AG04450 (cell line): ENCODE measurements at regions of chr4 and their contacts with region 1.

Region 1: DNA sequence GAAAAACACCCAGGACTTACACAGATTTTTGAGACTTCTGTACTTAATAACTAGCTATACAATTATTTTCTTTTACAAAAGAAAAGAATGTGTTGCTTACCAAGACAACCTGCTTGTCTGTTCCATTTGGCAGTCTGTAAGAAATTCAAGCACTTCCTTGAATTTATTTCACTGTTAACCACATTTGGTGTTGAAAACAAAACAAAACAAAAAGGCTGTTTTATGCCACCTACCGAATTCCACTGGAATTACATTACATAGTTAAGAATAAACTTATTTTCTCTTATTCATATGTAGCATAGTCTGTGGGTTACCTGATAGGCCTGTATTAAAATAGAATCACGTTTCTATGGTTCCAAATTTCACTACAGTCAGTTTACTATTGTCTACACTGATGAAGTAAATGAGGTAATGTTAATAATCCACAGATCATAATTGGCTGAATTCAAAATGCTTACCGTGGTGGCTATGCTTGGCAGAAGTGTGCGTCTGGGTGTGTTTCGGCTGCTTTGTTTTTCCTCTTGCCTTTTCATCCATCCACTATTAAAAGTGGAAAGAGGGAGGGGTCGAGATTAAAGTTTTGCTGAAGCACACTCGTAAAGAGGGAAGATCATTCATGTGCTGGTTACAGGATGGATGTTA is at the start of gene TLR1:
- DNase-seq: no peak
- H3K4me3 ChIP-seq: no peak within 1 kb of the TSS
- H3K27ac ChIP-seq: no peak within 1 kb of the TSS
- H3K27me3 ChIP-seq: no peaks in the 10 kb centered on the region
- CTCF ChIP-seq: peak; percentile 61
- polyA plus RNA-seq, gene TLR1: 0.88 and 0.93 TPM in 2 replicates

Region 2: GRCh38 chr4:38782452-38783108 is 22.2 kb before region 1 on chr4 and contains the start of gene TLR10:
- CTCF ChIA-PET with region 1: interaction called, 37 read pairs
- POLR2A ChIA-PET with region 1: no interaction called
- DNase-seq: peak; percentile 16
- H3K4me3 ChIP-seq: no peak within 1 kb of the TSS
- H3K27ac ChIP-seq: no peak within 1 kb of the TSS
- H3K27me3 ChIP-seq: peaks cover 4% of the 10 kb centered on the region
- CTCF ChIP-seq: peak; percentile 64
- polyA plus RNA-seq, gene TLR10: not detected in 2 replicates

Region 3: GRCh38 chr4:38791010-38791409 is 13.8 kb before region 1 on chr4:
- CTCF ChIA-PET with region 1: interaction called, 20 read pairs
- POLR2A ChIA-PET with region 1: no interaction called
- DNase-seq: no peak
- H3K4me3 ChIP-seq: no peak overlapping the region
- H3K27ac ChIP-seq: no peak overlapping the region
- H3K27me3 ChIP-seq: peaks cover 2% of the 10 kb centered on the region
- CTCF ChIP-seq: no peak

Region 4: DNA sequence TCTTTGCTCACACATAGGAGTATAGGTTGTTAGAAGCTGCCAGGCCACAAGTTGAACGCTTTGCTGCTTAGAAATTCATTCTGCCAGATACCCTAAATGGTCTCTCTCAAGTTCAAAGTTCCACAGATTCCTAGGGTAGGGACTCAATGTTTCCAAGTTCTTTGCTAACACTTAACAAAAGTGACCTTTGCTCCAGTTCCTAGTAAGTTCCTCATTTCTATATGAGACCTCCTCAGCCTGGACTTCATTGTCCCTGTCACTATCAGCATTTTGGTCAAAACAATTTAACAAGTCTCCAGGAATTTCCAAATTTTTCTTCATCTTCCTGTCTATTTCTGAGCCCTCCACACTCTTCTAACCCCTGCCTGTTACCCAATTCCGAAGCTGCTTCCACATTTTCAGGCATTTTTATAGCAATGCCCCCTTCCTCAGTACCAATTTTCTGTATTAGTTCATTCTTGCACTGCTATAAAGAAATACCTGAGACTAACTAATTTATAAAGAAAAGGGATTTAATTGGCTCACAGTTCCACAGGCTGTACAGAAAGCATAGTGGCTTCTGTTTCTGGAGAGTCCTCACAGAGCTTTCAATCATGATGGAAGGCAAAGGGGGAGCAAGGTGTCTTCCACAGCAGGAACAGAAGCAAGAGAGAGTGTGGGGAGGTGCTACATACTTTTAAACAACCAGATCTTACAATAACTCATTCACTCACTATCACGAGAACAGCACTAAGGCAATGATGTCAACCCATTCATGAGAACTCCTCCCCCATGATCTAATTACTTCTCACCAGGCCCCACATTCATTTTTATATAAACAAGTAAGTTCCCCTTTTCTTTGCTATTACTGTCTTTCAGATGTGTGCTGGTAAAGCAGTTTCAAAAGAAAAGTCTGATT is 11.4 kb after region 1 on chr4:
- CTCF ChIA-PET with region 1: interaction called, 31 read pairs
- POLR2A ChIA-PET with region 1: no interaction called
- DNase-seq: no peak
- H3K4me3 ChIP-seq: no peak overlapping the region
- H3K27ac ChIP-seq: no peak overlapping the region
- H3K27me3 ChIP-seq: peaks cover 2% of the 10 kb centered on the region
- CTCF ChIP-seq: no peak

Region 5: DNA sequence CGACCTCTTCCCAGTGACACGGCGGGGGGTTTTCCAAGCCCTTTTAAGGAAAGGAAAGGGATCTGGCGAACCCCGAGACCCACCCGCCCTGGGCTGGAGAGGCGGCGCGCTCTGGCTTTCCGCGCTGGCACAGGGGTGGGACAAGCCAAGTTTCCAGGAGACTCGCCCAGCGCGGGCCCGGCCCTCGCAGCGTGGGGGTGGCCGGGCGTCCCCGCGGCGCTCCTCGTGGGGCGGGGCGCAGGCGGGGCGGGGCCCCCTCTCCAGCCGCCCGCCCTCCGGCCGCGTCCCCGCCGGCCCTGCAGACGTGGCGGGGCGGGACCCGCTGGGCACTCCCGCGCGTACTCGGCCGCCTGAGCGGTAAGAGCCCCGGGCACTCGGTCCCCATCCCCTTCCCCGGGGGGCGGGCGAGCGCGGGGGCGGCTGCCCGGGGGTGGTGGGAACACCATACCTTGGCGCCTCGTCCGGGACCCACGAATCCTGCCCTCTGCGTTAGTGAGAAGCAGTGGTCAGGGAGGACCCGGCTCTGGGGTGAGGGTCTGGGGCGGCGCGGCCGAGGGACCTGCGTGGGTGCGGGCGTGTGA is 62.8 kb after region 1 on chr4 and contains the start of gene FAM114A1:
- CTCF ChIA-PET with region 1: no interaction called
- POLR2A ChIA-PET with region 1: no interaction called
- DNase-seq: no peak
- H3K4me3 ChIP-seq: peak within 1 kb of the TSS; percentile 97
- H3K27ac ChIP-seq: peak within 1 kb of the TSS; percentile 97
- H3K27me3 ChIP-seq: no peaks in the 10 kb centered on the region
- CTCF ChIP-seq: no peak
- polyA plus RNA-seq, gene FAM114A1: 258 and 303 TPM in 2 replicates